Activated B cell treated with CpG ODN at 0.5 μM for 24 hours (primary cell): ENCODE measurements at regions of chr3 and their contacts with region 1.

Region 1: DNA sequence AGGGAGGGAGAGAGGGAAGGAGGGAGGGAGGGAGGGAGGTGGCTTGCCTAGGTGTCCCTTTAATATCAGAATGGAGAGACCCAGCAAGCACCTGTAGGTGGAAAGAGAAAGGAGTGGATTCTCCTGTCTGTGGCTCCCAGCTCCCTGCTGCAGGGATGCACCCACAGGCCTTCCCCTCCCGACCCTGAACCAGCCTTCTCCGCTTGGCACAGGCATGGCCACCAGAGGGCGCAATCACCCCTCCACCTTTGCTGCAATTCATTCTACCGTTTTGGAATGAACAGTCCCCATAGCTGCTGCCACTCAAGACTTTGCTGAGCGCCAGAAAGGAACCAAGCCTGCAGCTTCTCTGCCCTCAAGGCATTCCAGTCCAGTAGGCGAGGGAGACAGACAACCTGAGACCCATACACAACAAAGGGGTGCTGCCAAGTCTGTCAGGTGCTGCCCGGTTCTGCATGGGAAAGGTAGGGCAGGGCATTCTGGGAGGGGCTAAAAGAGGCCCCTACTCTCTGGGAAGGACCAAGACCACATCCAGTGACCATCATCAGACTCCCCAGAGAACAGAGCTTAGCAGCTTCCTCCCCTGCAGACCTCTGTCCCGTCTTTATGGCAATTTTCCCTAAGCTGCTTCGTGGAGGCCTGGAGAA is 4.9 kb downstream of the TLR9 start:
- DNase-seq: peak; percentile 80
- ATAC-seq: peak; percentile 59
- H3K4me3 Mint-ChIP-seq: peak overlapping the region; percentile 50
- H3K27ac Mint-ChIP-seq: peak overlapping the region; percentile 53
- H3K4me1 Mint-ChIP-seq: peaks cover 88% of the 10 kb centered on the region
- H3K27me3 Mint-ChIP-seq: no peaks in the 10 kb centered on the region
- CTCF ChIP-seq: no peak

Region 2: GRCh38 chr3:52210037-52210436 is 10.5 kb before region 1 on chr3:
- CTCF ChIA-PET with region 1: interaction called, 6 read pairs
- POLR2A ChIA-PET with region 1: interaction called, 11 read pairs
- intact Hi-C with region 1: no loop called
- DNase-seq: no peak
- ATAC-seq: no peak
- H3K4me3 Mint-ChIP-seq: no peak overlapping the region
- H3K27ac Mint-ChIP-seq: no peak overlapping the region
- H3K4me1 Mint-ChIP-seq: no peaks in the 10 kb centered on the region
- H3K27me3 Mint-ChIP-seq: no peaks in the 10 kb centered on the region
- CTCF ChIP-seq: no peak

Region 3: GRCh38 chr3:52238761-52239701 is 18.5 kb after region 1 on chr3 and contains the start of gene TWF2:
- CTCF ChIA-PET with region 1: interaction called, 9 read pairs
- POLR2A ChIA-PET with region 1: interaction called, 147 read pairs
- intact Hi-C with region 1: loop called (anchors 1 kb)
- DNase-seq: peak; percentile 94
- ATAC-seq: peak; percentile 86
- H3K4me3 Mint-ChIP-seq: peak within 1 kb of the TSS; percentile 96
- H3K27ac Mint-ChIP-seq: peak within 1 kb of the TSS; percentile 93
- H3K4me1 Mint-ChIP-seq: peaks cover 72% of the 10 kb centered on the region
- H3K27me3 Mint-ChIP-seq: no peaks in the 10 kb centered on the region
- CTCF ChIP-seq: no peak
- total RNA-seq, gene TWF2: 74.1 and 76.7 TPM in 2 replicates

Region 4: DNA sequence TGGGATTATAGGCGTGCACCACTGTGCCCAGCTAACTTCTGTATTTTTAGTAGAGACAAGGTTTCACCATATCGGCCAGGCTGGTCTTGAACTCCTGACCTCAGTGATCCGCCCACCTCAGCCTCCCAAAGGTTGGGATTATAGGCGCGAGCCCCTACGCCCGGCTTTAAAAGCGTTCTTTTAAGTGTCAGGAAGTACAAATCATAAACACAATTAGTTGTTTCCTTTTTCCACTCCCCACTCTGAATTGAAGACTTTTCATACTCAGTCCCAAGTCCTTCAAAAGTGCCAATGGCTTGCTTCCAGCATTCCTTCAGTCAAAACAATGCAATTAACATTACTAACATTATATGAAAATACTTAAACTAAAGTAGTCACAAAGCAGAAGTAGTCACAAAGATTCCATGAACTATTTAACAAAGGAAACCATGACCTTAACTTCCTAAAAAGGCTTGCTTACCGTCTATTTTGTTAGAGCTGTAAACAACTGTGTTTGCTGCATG is 49.8 kb after region 1 on chr3:
- CTCF ChIA-PET with region 1: interaction called, 10 read pairs
- POLR2A ChIA-PET with region 1: interaction called, 6 read pairs
- intact Hi-C with region 1: no loop called
- DNase-seq: no peak
- ATAC-seq: no peak
- H3K4me3 Mint-ChIP-seq: peak overlapping the region; percentile 41
- H3K27ac Mint-ChIP-seq: peak overlapping the region; percentile 76
- H3K4me1 Mint-ChIP-seq: peaks cover 79% of the 10 kb centered on the region
- H3K27me3 Mint-ChIP-seq: no peaks in the 10 kb centered on the region
- CTCF ChIP-seq: no peak